Sciatic nerve (tissue), 2 donors: ENCODE measurements at regions of chr14 and their contacts with region 1.

Region 1: GRCh38 chr14:79629411-79630287 is 581.7 kb downstream of the DIO2 start:
- DNase-seq: no peak
- ATAC-seq: no peak

Region 2: GRCh38 chr14:79652513-79653307 is 23.1 kb after region 1 on chr14:
- intact Hi-C with region 1: loop called (anchors 1 kb)
- DNase-seq: no peak
- ATAC-seq: no peak